ENCODE measurements at regions of chr2 and their contacts with region 1.

Region 1: GRCh38 chr2:236180831-236181453 is 12.8 kb upstream of the GBX2 start:
- DNase-seq: peak; percentile 88
- H3K4me3 ChIP-seq: peak overlapping the region in 1 of 3 experiments; percentile 65
- H3K27ac ChIP-seq: peak overlapping the region; percentile 99
- H3K4me1 ChIP-seq: peaks cover 24% of the 10 kb centered on the region
- H3K27me3 ChIP-seq: no peaks in the 10 kb centered on the region
- CTCF ChIP-seq: peak; percentile 61 to 65
- POLR2A ChIP-seq: no peak

Region 2: GRCh38 chr2:235493775-235494715 is 686.9 kb before region 1 on chr2 and contains the start of gene AGAP1:
- CTCF ChIA-PET with region 1: no interaction called
- POLR2A ChIA-PET with region 1: no interaction called
- dilution Hi-C with region 1: no loop called
- intact Hi-C with region 1: loop called (anchors 5 kb)
- DNase-seq: peak; percentile 83
- H3K4me3 ChIP-seq: peak within 1 kb of the TSS; percentile 43 to 56 (median 47)
- H3K27ac ChIP-seq: peak within 1 kb of the TSS; percentile 38
- H3K4me1 ChIP-seq: peaks cover 11% of the 10 kb centered on the region
- H3K27me3 ChIP-seq: no peaks in the 10 kb centered on the region
- CTCF ChIP-seq: no peak
- POLR2A ChIP-seq: peak; percentile 52
- total RNA-seq, gene AGAP1: 19.5 and 20.9 TPM in 2 replicates

Region 3: DNA sequence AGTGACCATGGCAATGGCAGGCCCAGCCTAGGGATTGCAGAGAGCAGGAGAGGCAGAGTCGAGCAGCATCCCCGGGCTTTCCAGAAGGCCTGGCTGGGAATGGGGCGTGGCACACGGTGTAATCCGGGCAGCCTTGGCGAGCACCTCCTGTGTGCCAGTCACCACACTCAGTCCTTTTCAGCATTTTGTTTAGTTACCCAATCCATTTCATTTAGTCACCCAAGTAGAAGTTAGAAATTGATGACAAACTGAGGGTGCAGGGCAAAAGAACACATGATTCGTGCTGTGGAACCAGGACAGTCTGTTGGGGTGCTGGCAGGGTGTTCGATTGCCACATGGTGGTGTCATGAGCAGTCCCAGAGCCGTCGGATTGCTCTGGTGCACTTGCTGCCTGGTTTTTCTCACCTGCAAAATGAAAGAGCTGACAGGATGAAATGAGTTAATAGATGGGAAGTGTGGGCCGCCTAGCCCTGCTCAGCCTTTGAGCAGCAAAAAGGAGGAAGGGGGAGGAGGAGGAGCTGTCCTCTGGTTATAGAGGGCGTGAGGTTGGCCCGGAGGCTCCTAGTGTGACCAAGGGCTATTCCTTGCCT is 387.7 kb before region 1 on chr2:
- CTCF ChIA-PET with region 1: interaction called, 12 read pairs
- POLR2A ChIA-PET with region 1: no interaction called
- dilution Hi-C with region 1: no loop called
- intact Hi-C with region 1: no loop called
- DNase-seq: peak; percentile 24
- H3K4me3 ChIP-seq: no peak overlapping the region
- H3K27ac ChIP-seq: no peak overlapping the region
- H3K4me1 ChIP-seq: no peaks in the 10 kb centered on the region
- H3K27me3 ChIP-seq: no peaks in the 10 kb centered on the region
- CTCF ChIP-seq: peak; percentile 27 to 57
- POLR2A ChIP-seq: no peak

Region 4: GRCh38 chr2:235940330-235940729 is 240.6 kb before region 1 on chr2:
- CTCF ChIA-PET with region 1: interaction called, 19 read pairs
- POLR2A ChIA-PET with region 1: no interaction called
- dilution Hi-C with region 1: no loop called
- intact Hi-C with region 1: loop called (anchors 1 kb)
- DNase-seq: no peak
- H3K4me3 ChIP-seq: no peak overlapping the region
- H3K27ac ChIP-seq: no peak overlapping the region
- H3K4me1 ChIP-seq: peaks cover 3% of the 10 kb centered on the region
- H3K27me3 ChIP-seq: no peaks in the 10 kb centered on the region
- CTCF ChIP-seq: no peak
- POLR2A ChIP-seq: no peak

Region 5: GRCh38 chr2:236143811-236144210 is 37.1 kb before region 1 on chr2:
- CTCF ChIA-PET with region 1: interaction called, 10 read pairs
- POLR2A ChIA-PET with region 1: no interaction called
- dilution Hi-C with region 1: no loop called
- intact Hi-C with region 1: loop called (anchors 1 kb)
- DNase-seq: no peak
- H3K4me3 ChIP-seq: no peak overlapping the region
- H3K27ac ChIP-seq: no peak overlapping the region
- H3K4me1 ChIP-seq: no peaks in the 10 kb centered on the region
- H3K27me3 ChIP-seq: no peaks in the 10 kb centered on the region
- CTCF ChIP-seq: no peak
- POLR2A ChIP-seq: no peak

Region 6: GRCh38 chr2:236205867-236206645 is 25.1 kb after region 1 on chr2:
- CTCF ChIA-PET with region 1: interaction called, 8 read pairs
- POLR2A ChIA-PET with region 1: no interaction called
- dilution Hi-C with region 1: no loop called
- intact Hi-C with region 1: loop called (anchors 2 kb)
- DNase-seq: peak; percentile 60
- H3K4me3 ChIP-seq: no peak overlapping the region
- H3K27ac ChIP-seq: peak overlapping the region; percentile 49
- H3K4me1 ChIP-seq: peaks cover 14% of the 10 kb centered on the region
- H3K27me3 ChIP-seq: no peaks in the 10 kb centered on the region
- CTCF ChIP-seq: no peak
- POLR2A ChIP-seq: no peak